ENCODE measurements at regions of chr6 and their contacts with region 1.

Region 1: GRCh38 chr6:131694831-131695426 is 6.3 kb downstream of the OR2A4 start:
- DNase-seq: peak; percentile 71
- H3K4me3 Mint-ChIP-seq: no peak overlapping the region
- H3K27ac Mint-ChIP-seq: no peak overlapping the region
- H3K4me1 Mint-ChIP-seq: no peaks in the 10 kb centered on the region
- H3K27me3 Mint-ChIP-seq: no peaks in the 10 kb centered on the region
- CTCF ChIP-seq: peak; percentile 75

Region 2: GRCh38 chr6:131787766-131788712 is 93.1 kb after region 1 on chr6:
- CTCF ChIA-PET with region 1: interaction called, 5 read pairs
- intact Hi-C with region 1: loop called (anchors 10 kb)
- DNase-seq: no peak
- H3K4me3 Mint-ChIP-seq: no peak overlapping the region
- H3K27ac Mint-ChIP-seq: no peak overlapping the region
- H3K4me1 Mint-ChIP-seq: no peaks in the 10 kb centered on the region
- H3K27me3 Mint-ChIP-seq: peaks cover 27% of the 10 kb centered on the region
- CTCF ChIP-seq: no peak

Region 3: GRCh38 chr6:131909408-131910218 is 214.7 kb after region 1 on chr6:
- CTCF ChIA-PET with region 1: interaction called, 14 read pairs
- intact Hi-C with region 1: loop called (anchors 2 kb)
- DNase-seq: peak; percentile 84
- H3K4me3 Mint-ChIP-seq: no peak overlapping the region
- H3K27ac Mint-ChIP-seq: no peak overlapping the region
- H3K4me1 Mint-ChIP-seq: no peaks in the 10 kb centered on the region
- H3K27me3 Mint-ChIP-seq: peaks cover 11% of the 10 kb centered on the region
- CTCF ChIP-seq: peak; percentile 80

Region 4: DNA sequence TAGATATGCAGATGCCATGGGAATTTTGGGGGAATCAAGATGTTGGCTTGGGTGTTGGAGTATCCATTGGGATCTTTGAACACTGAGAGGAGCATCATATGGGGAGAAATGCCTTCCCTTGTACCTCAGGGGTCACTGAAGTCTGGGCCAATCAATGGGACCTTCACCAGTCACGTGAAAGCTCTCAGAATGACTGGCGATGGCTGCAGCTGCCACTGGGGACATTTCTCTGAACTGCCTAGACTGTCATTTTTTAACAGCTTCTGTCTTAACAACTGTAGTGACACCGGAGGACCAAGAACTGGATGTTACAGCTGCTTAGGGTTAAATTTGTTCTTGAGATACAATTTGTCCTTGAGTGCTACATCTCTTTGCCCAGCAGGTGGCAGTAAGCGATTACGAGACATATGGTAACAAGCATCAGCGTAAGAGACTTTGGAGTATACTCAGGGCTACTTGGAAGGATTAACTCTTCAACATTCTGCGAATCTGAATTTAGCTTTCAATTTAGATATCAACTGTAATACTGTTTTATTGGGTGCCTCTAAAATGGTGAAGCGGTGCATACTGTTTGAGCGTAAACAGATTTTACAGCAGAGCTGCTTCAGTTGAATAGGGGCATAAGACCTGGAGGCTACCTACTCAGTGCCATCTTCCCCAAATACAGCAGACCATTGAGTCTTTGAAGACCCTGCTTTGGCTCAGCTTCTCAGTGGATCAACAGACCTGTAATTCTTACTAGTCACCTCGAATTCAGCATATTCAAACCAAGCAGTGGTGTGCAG is 220.2 kb after region 1 on chr6:
- CTCF ChIA-PET with region 1: interaction called, 14 read pairs
- intact Hi-C with region 1: loop called (anchors 2 kb)
- DNase-seq: peak; percentile 64
- H3K4me3 Mint-ChIP-seq: no peak overlapping the region
- H3K27ac Mint-ChIP-seq: no peak overlapping the region
- H3K4me1 Mint-ChIP-seq: peaks cover 7% of the 10 kb centered on the region
- H3K27me3 Mint-ChIP-seq: peaks cover 11% of the 10 kb centered on the region
- CTCF ChIP-seq: peak; percentile 66

Region 5: DNA sequence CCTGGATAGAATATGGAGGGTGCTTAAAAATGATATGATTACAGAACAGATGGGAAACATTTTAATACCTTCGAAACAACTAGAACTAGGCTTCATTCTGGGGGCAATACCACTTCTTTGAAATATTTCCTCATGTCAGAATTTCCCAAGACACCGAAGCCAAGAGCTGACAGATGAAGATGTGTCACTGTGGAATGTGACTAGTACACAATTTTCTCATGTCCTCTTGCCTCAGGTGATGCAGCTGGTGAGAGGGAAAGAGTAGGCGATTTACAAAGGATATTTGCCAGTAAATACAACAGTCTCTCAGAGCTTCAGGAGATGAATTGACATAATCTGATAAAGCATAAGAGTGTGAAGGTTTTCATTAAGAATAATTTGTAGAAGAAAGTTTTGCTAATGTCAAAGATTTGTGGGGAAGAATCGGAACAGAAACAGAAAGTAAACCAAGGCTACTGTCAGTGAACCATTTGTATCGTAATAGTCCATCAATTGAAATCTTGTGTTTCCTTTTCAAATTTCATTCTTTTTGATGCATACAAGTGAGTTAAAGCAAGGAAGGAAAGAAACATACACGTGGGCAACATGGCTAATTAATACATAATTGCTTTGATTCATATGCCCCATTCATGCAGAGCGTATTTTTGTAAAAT is 420.9 kb after region 1 on chr6:
- CTCF ChIA-PET with region 1: no interaction called
- intact Hi-C with region 1: no loop called
- DNase-seq: no peak
- H3K4me3 Mint-ChIP-seq: no peak overlapping the region
- H3K27ac Mint-ChIP-seq: no peak overlapping the region
- H3K4me1 Mint-ChIP-seq: no peaks in the 10 kb centered on the region
- H3K27me3 Mint-ChIP-seq: no peaks in the 10 kb centered on the region
- CTCF ChIP-seq: no peak